H1 (cell line): ENCODE measurements at regions of chr5 and their contacts with region 1.

Region 1: GRCh38 chr5:79514391-79515105 is 614 bp upstream of the HOMER1 start:
- DNase-seq: peak; percentile 87 to 92
- H3K4me3 ChIP-seq: peak overlapping the region; percentile 80 to 96 (median 92)
- H3K27ac ChIP-seq: peak overlapping the region; percentile 97
- H3K4me1 ChIP-seq: peaks cover 3 to 8% (median 5%) of the 10 kb centered on the region in 4 experiments; a peak in 4 of 7 replicates
- H3K27me3 ChIP-seq: no peaks in the 10 kb centered on the region
- CTCF ChIP-seq: no peak
- EP300 ChIP-seq: peak in 1 of 2 experiments; percentile 75; a peak in 1 of 3 replicates
- POLR2A ChIP-seq: peak; percentile 95 to 98
- RAD21 ChIP-seq: 0 out of 4 replicates have a peak, but pooled peaks of 1 of the 2 experiments have one; percentile 1

Region 2: DNA sequence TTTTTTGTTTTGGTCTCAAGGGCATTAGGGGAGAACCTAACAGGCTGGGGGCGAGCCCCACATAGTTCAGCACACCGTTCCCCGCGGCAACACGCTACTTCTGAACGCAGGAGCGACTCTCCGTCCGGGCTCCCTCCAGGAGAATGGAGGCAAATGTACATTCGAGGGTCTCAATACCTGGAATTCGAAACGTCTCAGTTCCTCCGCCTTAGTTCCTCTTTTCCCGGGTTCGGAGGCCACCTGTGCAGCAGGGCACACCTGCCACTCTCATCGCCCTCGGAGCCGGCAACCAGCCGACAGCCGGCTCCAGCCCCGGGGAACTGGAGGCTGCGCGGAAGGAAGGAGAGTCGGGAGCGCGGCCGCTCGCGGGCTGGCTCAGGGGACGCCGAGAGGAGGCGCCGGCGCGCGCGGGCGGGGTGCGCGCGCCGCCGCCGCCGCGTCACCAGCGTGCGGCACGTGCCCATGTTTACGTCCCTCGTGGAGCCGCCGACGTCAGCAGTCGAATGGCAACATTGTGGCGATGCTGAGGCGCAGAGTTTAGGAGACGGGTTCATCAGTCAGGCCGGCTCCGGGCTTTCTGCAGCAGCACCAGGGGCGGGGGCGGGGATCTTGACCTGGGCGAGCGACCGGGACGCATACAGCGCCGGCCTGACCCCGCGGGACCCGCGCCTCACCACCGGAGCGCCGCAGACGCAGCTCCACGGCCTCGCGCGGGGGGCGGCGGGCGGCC is 278.7 kb before region 1 on chr5 and contains the start of gene JMY:
- CTCF ChIA-PET with region 1: no interaction called
- POLR2A ChIA-PET with region 1: interaction called, 17 read pairs
- DNase-seq: peak; percentile 41 to 80
- H3K4me3 ChIP-seq: peak within 1 kb of the TSS; percentile 70 to 89 (median 83)
- H3K27ac ChIP-seq: peak within 1 kb of the TSS; percentile 92
- H3K4me1 ChIP-seq: peaks cover 0 to 2% (median under 1%) of the 10 kb centered on the region in 4 experiments; a peak in 1 of 7 replicates
- H3K27me3 ChIP-seq: no peaks in the 10 kb centered on the region
- CTCF ChIP-seq: no peak
- EP300 ChIP-seq: no peak
- POLR2A ChIP-seq: peak; percentile 61 to 83
- RAD21 ChIP-seq: no peak; a peak in 1 of 4 replicates
- total RNA-seq, gene JMY: 13.9 and 14.0 TPM in 2 replicates

Region 3: GRCh38 chr5:79416499-79416898 is 98.0 kb before region 1 on chr5:
- CTCF ChIA-PET with region 1: no interaction called
- POLR2A ChIA-PET with region 1: no interaction called
- DNase-seq: no peak
- H3K4me3 ChIP-seq: no peak overlapping the region
- H3K27ac ChIP-seq: no peak overlapping the region
- H3K4me1 ChIP-seq: no peaks in the 10 kb centered on the region
- H3K27me3 ChIP-seq: no peaks in the 10 kb centered on the region
- CTCF ChIP-seq: no peak
- EP300 ChIP-seq: no peak
- POLR2A ChIP-seq: no peak
- RAD21 ChIP-seq: no peak

Region 4: GRCh38 chr5:79488775-79489174 is 25.8 kb before region 1 on chr5:
- CTCF ChIA-PET with region 1: interaction called, 3 read pairs
- POLR2A ChIA-PET with region 1: interaction called, 94 read pairs
- DNase-seq: no peak
- H3K4me3 ChIP-seq: no peak overlapping the region
- H3K27ac ChIP-seq: no peak overlapping the region
- H3K4me1 ChIP-seq: peaks cover 0 to 7% (median 5%) of the 10 kb centered on the region in 4 experiments; a peak in 4 of 7 replicates
- H3K27me3 ChIP-seq: no peaks in the 10 kb centered on the region
- CTCF ChIP-seq: no peak
- EP300 ChIP-seq: no peak
- POLR2A ChIP-seq: no peak
- RAD21 ChIP-seq: no peak

Region 5: GRCh38 chr5:79495319-79495718 is 19.2 kb before region 1 on chr5:
- CTCF ChIA-PET with region 1: interaction called, 3 read pairs
- POLR2A ChIA-PET with region 1: interaction called, 94 read pairs
- DNase-seq: no peak
- H3K4me3 ChIP-seq: no peak overlapping the region
- H3K27ac ChIP-seq: no peak overlapping the region
- H3K4me1 ChIP-seq: peaks cover 0 to 15% (median 8%) of the 10 kb centered on the region in 4 experiments; a peak in 4 of 7 replicates
- H3K27me3 ChIP-seq: no peaks in the 10 kb centered on the region
- CTCF ChIP-seq: no peak
- EP300 ChIP-seq: no peak
- POLR2A ChIP-seq: no peak
- RAD21 ChIP-seq: no peak

Region 6: GRCh38 chr5:79612667-79613198 is 98.2 kb after region 1 on chr5:
- CTCF ChIA-PET with region 1: no interaction called
- POLR2A ChIA-PET with region 1: interaction called, 15 read pairs
- DNase-seq: no peak
- H3K4me3 ChIP-seq: peak overlapping the region; percentile 83 to 97 (median 90)
- H3K27ac ChIP-seq: peak overlapping the region; percentile 57; the same call in 1 of the 2 replicates
- H3K4me1 ChIP-seq: peaks cover 0 to 5% (median 0%) of the 10 kb centered on the region in 4 experiments; a peak in 2 of 7 replicates
- H3K27me3 ChIP-seq: no peaks in the 10 kb centered on the region
- CTCF ChIP-seq: no peak
- EP300 ChIP-seq: no peak
- POLR2A ChIP-seq: no peak; a peak in 1 of 3 replicates
- RAD21 ChIP-seq: no peak